Mucosa of descending colon (tissue), 3 donors: ENCODE measurements at regions of chr11 and their contacts with region 1.

Region 1: GRCh38 chr11:43282607-43283440 is 29.0 kb upstream of the API5 start:
- DNase-seq: peak in 2 of 3 donors; percentile 33 to 45
- ATAC-seq: peak; percentile 37
- H3K4me3 ChIP-seq: no peak overlapping the region
- H3K4me1 ChIP-seq: no peaks in the 10 kb centered on the region
- CTCF ChIP-seq: peak; percentile 80

Region 2: DNA sequence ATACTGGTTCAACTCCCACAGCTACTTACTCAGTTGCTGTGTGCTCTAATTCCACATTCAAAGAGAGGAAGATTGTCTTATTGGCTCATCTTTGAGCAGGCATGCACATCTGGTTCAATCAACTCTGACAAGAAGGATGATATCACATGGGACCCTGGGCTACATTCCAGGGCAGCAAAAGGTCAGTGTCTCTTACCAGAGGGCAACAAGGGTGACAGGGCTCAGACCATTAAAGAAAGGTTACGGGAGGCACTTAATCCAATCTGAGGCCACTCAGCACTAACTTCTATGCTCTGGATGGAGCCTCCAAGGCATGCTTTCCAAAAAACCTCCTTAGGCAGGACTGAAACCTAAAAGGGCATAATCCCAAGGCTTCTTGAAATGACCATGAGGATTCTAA is 520.5 kb before region 1 on chr11:
- intact Hi-C with region 1: loop called in 1 of 2 experiments (anchors 10 kb)
- DNase-seq: no peak
- ATAC-seq: no peak
- H3K4me3 ChIP-seq: no peak overlapping the region
- H3K4me1 ChIP-seq: no peaks in the 10 kb centered on the region
- CTCF ChIP-seq: no peak

Region 3: DNA sequence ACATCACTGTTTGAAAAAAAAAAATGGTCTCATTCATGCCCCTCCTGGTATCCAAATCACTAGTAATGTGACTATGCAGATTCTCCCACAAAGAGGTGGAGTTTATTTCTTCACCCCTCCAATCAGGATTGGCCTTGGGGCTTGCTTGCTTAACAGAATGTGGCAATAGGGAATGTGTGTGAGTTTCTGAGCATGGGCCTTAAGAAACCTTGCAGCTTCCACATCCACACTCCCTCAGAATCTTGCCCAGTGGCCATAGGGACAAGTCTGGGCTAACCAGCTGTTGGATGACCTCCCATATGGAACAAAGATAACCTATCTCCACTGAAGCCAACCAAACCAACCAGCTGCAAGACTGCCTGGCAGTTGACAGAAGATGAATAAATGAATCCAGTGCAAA is 59.1 kb before region 1 on chr11:
- intact Hi-C with region 1: no loop called
- DNase-seq: no peak
- ATAC-seq: no peak
- H3K4me3 ChIP-seq: no peak overlapping the region
- H3K4me1 ChIP-seq: no peaks in the 10 kb centered on the region
- CTCF ChIP-seq: no peak

Region 4: GRCh38 chr11:43234881-43235280 is 47.9 kb before region 1 on chr11:
- intact Hi-C with region 1: no loop called
- DNase-seq: no peak
- ATAC-seq: no peak
- H3K4me3 ChIP-seq: no peak overlapping the region
- H3K4me1 ChIP-seq: no peaks in the 10 kb centered on the region
- CTCF ChIP-seq: no peak

Region 5: DNA sequence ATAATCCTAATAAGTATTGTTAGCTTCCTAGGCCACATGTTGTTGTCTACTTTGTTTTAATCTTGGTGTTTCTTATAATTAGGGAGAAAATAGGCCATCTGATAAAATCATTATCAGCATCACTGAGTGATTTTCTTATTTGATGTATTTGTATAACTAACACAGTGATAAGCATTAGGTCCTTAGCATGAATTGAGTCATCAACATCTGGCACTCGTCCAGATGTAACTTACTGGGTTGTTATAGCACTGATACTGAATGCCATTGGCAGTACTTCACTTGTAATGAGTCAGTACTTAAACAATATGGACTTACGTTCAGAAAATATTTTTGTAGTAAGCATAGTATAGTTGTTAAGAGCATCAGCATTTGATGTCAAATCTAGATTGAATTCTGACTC is 45.2 kb after region 1 on chr11:
- intact Hi-C with region 1: no loop called
- DNase-seq: peak in 1 of 3 donors; percentile 38
- ATAC-seq: peak; percentile 47
- H3K4me3 ChIP-seq: no peak overlapping the region
- H3K4me1 ChIP-seq: no peaks in the 10 kb centered on the region
- CTCF ChIP-seq: no peak